ENCODE measurements at regions of chr2 and their contacts with region 1.

Region 1: GRCh38 chr2:70871398-70872211 is 36.0 kb upstream of the CD207 start:
- DNase-seq: peak; percentile 80 to 86
- H3K4me3 ChIP-seq: no peak overlapping the region
- H3K27ac ChIP-seq: no peak overlapping the region
- H3K4me1 ChIP-seq: peaks cover 0 to 7% of the 10 kb centered on the region in 2 donors
- H3K27me3 ChIP-seq: no peaks in the 10 kb centered on the region
- CTCF ChIP-seq: peak; percentile 74 to 91 (median 81)
- POLR2A ChIP-seq: no peak

Region 2: DNA sequence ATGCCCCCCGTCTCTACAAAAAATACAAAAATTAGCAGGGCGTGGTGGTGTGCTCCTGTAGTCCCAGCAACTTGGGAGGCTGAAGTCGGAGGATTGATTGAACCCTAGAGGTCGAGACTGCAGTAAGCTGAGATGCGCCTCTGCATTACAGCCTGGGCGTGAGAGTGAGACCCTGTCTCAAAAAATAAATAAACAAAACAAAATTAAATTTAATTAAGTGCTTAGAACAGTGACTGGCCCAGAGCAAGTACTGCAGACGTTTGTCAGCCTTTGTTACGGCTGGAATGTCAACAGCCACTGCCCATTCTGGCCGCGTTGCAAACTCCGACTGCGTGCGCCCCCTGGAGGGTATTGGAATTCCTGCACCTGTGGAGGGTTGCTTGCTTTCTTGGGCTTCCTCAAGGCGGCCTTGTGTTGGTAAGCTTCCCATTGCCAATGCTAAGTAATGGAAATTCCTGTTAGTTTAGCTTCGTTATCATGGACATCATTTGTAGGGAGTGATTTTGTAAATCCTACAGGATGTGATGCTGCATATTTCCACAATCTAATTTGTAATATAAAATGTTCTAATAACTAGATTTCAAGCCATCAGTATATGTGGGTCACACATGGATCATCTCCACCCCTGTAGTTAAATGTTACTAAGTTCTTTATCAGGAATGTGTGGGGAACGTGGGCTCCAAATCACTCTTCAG is 48.2 kb after region 1 on chr2:
- intact Hi-C with region 1: loop called (anchors 5 kb)
- DNase-seq: peak; percentile 83 to 89
- H3K4me3 ChIP-seq: no peak overlapping the region
- H3K27ac ChIP-seq: no peak overlapping the region
- H3K4me1 ChIP-seq: no peaks in the 10 kb centered on the region
- H3K27me3 ChIP-seq: no peaks in the 10 kb centered on the region
- CTCF ChIP-seq: peak; percentile 74 to 93 (median 86)
- POLR2A ChIP-seq: no peak